ENCODE measurements at regions of chrX and their contacts with region 1.

Region 1: DNA sequence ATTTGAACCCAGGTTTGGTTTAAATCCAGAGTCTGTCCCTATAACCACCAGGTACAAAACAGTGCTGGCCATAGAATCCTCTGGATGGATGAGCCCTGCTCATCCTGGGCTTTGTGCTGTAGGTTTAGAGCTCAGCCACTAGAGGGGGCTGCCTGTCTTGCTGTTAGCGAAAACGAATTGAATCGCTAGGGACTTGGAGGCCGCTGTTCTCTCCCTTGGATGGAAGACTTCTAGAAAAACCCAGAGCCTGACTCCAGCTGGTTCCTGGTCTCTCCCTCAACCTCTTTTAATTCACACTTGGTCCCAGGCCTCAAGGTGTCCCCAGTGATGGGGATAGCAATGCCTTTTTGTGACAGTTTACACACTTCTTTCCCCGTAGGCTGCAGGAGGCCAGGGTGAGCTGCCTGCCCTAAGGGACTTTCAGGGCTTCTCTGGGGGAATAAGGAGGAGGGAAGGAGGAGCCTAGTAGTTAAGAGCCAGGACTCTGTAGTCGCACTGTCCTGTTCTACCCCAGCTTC is 8.7 kb downstream of the RIPPLY1 start:
- DNase-seq: peak in 8 of 9 experiments; percentile 6 to 59 (median 48)
- ATAC-seq: peak; percentile 61
- H3K4me3 ChIP-seq: no peak overlapping the region
- H3K4me3 Mint-ChIP-seq: no peak overlapping the region
- H3K27ac ChIP-seq: no peak overlapping the region
- H3K27ac Mint-ChIP-seq: no peak overlapping the region
- H3K4me1 ChIP-seq: no peaks in the 10 kb centered on the region
- H3K4me1 Mint-ChIP-seq: no peaks in the 10 kb centered on the region
- H3K27me3 ChIP-seq: no peaks in the 10 kb centered on the region
- H3K27me3 Mint-ChIP-seq: peaks cover 4% of the 10 kb centered on the region
- CTCF ChIP-seq: peak; percentile 47

Region 2: GRCh38 chrX:106952988-106953387 is 58.5 kb after region 1 on chrX:
- CTCF ChIA-PET with region 1: interaction called, 5 read pairs
- POLR2A ChIA-PET with region 1: no interaction called
- intact Hi-C with region 1: loop called (anchors 1 to 5 kb)
- DNase-seq: peak in 1 of 9 experiments; percentile 8
- ATAC-seq: no peak
- H3K4me3 ChIP-seq: no peak overlapping the region
- H3K4me3 Mint-ChIP-seq: no peak overlapping the region
- H3K27ac ChIP-seq: no peak overlapping the region
- H3K27ac Mint-ChIP-seq: no peak overlapping the region
- H3K4me1 ChIP-seq: no peaks in the 10 kb centered on the region
- H3K4me1 Mint-ChIP-seq: no peaks in the 10 kb centered on the region
- H3K27me3 ChIP-seq: no peaks in the 10 kb centered on the region
- H3K27me3 Mint-ChIP-seq: no peaks in the 10 kb centered on the region
- CTCF ChIP-seq: no peak

Region 3: GRCh38 chrX:107272431-107272921 is 378.0 kb after region 1 on chrX:
- CTCF ChIA-PET with region 1: interaction called, 4 read pairs
- POLR2A ChIA-PET with region 1: no interaction called
- intact Hi-C with region 1: loop called in 1 of 2 experiments (anchors 5 kb)
- DNase-seq: peak in 5 of 9 experiments; percentile 5 to 12 (median 10)
- ATAC-seq: no peak
- H3K4me3 ChIP-seq: no peak overlapping the region
- H3K4me3 Mint-ChIP-seq: no peak overlapping the region
- H3K27ac ChIP-seq: no peak overlapping the region
- H3K27ac Mint-ChIP-seq: no peak overlapping the region
- H3K4me1 ChIP-seq: no peaks in the 10 kb centered on the region
- H3K4me1 Mint-ChIP-seq: peaks cover 7% of the 10 kb centered on the region
- H3K27me3 ChIP-seq: no peaks in the 10 kb centered on the region
- H3K27me3 Mint-ChIP-seq: peaks cover 11% of the 10 kb centered on the region
- CTCF ChIP-seq: no peak

Measured in CD8-positive, alpha-beta T cell (primary cell).